Right ventricle myocardium superior (tissue), 1 donor: ENCODE measurements at regions of chr17 and their contacts with region 1.

Region 1: GRCh38 chr17:66255112-66255511 is 25.9 kb upstream of the APOH start:
- DNase-seq: no peak
- ATAC-seq: peak; percentile 89

Region 2: DNA sequence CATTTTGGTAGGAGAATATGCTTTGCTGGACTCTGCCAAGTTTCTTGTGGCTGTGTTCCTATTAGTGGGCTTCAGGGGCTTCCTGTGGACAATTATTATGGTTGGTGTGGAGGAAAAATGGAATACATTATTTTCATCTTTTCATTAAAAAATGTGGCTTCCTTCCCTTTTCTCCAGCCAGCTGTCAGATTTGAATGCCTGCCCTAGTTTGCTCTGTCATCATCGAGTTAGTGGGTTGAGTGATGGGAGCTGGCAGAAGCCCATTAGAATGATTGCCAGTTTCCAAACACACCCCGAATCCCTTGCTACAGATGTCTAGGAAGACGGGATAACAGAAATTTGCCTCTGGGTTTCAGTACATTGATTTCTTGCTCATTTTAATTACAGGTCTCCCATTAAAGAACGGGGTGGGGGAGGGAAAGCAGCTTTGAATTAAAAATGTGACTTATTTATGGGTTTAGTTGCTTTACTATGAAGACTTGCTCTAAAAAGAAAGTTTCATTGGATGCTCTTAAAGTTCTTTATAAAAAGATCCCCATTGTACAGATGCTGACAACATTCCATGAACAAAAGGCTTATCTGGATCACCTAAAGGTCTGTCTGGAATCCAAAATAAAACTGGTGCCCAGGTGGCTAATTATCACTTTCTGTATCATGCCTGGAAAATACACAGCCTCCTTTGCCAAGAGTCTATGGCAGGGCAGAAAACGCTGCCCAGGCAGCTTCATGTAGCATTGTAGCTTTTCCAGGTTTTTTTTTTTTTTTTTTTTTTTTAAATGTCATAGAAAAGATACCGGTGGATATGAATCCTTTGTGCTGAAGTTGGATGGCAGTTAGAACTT is 150.9 kb after region 1 on chr17:
- intact Hi-C with region 1: no loop called
- DNase-seq: no peak
- ATAC-seq: peak; percentile 29

Region 3: GRCh38 chr17:66567234-66568170 is 312.4 kb after region 1 on chr17:
- intact Hi-C with region 1: loop called (anchors 5 kb)
- DNase-seq: peak; percentile 82
- ATAC-seq: peak; percentile 80

Region 4: GRCh38 chr17:66625311-66625775 is 370.2 kb after region 1 on chr17:
- intact Hi-C with region 1: loop called (anchors 5 kb)
- DNase-seq: no peak
- ATAC-seq: no peak

Region 5: DNA sequence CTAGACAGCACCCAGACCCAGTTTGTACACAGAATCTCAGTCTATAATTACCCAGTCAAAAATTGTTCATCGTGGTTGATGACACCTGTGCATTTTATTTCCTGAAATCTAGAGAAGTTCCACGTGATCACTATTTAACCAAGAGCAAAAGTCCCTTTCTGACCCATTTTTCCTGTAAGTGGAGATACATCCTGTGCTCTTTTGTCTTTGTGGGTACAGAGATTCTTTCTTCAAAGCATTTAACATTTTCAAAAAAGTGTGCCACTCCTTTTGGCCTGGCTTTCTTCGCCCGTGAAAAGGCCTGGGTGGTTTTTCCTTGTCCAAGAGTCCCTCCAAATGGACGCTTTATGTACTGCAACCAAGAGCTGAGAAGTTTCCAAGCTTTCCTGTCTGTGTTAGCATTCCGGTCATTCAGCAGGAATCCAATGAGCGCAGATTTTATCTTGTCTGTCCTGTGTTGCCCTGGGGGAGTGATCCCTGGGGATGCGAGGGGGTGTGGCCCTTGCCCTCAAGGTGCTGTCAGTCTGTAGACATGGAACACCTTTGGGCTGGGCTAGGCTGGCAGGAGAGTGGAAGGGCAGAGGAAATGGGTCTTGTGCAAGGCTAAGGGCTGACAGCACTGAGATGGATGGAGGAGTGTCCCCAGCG is 418.7 kb after region 1 on chr17:
- intact Hi-C with region 1: loop called (anchors 2 kb)
- DNase-seq: no peak
- ATAC-seq: peak; percentile 82